ENCODE measurements at regions of chr6 and their contacts with region 1.

Region 1: GRCh38 chr6:44338228-44339122 is 4.0 kb upstream of the SPATS1 start:
- DNase-seq: peak in 8 of 10 donors; percentile 26 to 89 (median 64)

Region 2: GRCh38 chr6:43990627-43991619 is 347.6 kb before region 1 on chr6:
- intact Hi-C with region 1: no loop called
- DNase-seq: peak in 1 of 10 donors; percentile 70

Region 3: DNA sequence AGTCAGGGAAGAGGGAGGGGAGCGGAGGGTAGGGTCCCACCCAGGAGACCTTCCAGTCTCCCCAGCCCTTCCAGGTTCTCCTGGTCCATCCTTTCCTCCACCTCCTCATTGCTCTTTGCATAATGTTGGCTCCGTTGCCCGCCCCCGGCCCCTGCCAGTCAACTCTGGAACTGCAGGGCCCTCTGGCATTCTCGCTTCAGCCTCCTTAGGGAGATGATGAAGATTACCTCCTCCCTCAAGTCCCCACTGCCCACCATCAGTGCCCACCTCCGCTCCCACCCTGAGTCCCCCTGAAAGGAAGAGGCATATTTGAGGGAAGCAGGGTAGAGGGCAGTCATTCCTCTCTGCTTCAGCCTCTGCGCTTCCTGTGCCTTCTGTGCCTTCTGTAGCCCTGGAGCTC is 202.6 kb before region 1 on chr6:
- intact Hi-C with region 1: no loop called
- DNase-seq: no peak

Region 4: DNA sequence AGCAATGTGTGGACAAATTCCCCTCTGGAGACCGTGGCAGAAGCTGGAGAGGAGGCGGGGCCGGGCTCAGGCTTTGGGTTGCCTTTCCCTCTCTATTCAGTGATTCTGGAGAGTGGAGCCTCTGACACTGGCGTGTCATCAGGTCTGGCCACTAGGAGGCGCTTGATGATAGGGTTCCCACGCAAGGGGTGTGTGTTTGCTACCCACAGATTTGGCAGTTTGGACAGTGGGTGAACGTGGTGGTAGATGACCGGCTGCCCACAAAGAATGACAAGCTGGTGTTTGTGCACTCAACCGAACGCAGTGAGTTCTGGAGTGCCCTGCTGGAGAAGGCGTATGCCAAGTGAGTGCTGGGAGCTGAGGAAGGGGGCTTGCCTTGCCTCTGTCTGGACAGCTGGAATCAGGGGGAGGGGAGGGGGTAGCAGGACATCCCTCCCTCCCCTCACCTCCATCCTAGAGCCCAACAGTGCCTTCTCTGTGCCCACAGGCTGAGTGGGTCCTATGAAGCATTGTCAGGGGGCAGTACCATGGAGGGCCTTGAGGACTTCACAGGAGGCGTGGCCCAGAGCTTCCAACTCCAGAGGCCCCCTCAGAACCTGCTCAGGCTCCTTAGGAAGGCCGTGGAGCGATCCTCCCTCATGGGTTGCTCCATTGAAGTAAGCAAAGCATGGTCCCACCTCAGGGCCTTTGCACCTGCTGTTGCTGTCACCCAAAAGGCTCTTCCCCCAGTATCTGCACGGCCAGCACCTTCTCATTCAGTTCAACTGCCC is 165.6 kb before region 1 on chr6:
- intact Hi-C with region 1: loop called (anchors 1 kb)
- DNase-seq: peak; percentile 65 to 97 (median 85)

Region 5: GRCh38 chr6:44268095-44268628 is 70.3 kb before region 1 on chr6:
- intact Hi-C with region 1: loop called (anchors 1 kb)
- DNase-seq: peak in 8 of 10 donors; percentile 40 to 92 (median 66)

Region 6: GRCh38 chr6:44606504-44606903 is 268.0 kb after region 1 on chr6:
- intact Hi-C with region 1: no loop called
- DNase-seq: no peak

Measured in posterior cingulate gyrus (tissue), 11 donors.